AG04449 (cell line): ENCODE measurements at regions of chr2 and their contacts with region 1.

Region 1: DNA sequence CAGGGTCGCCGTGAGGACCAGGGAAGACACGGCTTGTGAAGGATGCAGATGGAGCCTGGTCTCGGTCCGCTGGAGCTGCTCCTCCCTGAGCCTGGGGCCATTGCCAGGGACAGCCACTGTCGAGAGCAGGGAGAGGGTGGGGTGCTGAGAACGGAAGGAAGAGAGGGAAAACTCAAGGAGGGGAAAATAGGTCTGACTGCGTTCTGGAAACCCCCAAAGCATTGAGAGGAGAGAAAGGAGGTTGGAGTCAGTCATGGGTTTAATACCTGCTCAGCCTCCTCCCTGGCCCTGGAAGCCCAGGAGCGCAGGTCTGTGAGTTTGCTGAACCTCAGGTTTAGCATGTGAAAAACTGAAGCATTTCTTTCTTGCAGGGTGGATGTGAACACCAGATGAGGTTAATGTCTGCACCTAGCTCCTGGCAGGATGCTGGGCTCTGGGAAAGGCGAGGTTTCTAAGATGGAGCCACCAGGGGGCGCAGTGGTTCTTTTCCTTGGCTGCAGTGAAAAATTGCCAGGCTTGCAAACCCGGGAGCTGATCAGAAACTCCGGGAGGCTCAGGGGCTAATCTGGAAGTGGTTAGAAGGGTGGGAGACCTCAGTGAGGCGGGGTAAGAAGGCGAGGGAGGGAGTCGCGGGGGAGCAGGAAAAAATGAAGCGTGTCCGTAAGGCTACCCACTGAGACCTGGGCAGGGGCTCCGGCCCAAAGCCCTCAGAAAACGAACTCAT is 33.6 kb upstream of the RNF149 start:
- DNase-seq: no peak
- H3K4me3 ChIP-seq: peak overlapping the region; percentile 39
- CTCF ChIP-seq: peak; percentile 81

Region 2: DNA sequence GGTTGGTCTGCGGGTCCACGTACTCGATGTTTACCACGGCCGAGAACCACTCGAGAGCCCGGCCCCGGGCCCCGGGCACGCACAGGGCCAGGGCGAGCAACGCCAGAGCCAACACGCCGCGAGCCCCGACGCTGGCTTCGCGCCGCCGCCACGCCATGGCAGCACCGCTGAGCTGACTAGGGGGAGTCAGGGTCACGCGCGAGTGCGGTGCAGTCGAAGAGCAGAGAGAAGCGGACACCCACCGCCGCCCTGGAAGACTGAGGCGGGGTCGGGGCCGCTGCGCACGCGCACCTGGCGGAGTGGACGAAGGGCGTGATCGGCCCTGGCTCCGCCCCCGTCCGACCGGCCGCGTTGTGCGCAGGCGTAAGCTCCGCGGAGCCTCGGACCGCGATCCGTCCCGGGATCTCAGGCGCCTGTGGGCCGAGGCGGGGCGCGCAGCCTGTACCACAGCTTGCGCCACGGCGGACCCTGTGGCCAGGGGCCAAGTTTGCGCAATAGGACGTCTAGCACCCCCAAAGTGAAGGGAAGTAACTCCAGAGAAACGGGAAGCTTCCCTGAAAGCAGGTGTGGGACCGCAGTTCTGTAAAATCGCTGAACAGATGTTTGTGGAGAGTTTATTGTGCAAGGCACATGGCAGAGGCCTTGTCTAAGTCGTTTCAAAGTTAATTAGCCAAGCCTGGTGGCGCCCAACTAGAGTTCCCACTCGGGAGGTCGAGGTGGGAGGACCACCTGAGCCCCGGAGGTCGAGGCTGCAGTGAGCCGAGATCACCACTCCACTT is 33.4 kb before region 1 on chr2 and contains the start of gene RNF149:
- CTCF ChIA-PET with region 1: interaction called, 12 read pairs
- POLR2A ChIA-PET with region 1: interaction called, 3 read pairs
- DNase-seq: no peak
- H3K4me3 ChIP-seq: peak within 1 kb of the TSS; percentile 84
- CTCF ChIP-seq: no peak

Region 3: DNA sequence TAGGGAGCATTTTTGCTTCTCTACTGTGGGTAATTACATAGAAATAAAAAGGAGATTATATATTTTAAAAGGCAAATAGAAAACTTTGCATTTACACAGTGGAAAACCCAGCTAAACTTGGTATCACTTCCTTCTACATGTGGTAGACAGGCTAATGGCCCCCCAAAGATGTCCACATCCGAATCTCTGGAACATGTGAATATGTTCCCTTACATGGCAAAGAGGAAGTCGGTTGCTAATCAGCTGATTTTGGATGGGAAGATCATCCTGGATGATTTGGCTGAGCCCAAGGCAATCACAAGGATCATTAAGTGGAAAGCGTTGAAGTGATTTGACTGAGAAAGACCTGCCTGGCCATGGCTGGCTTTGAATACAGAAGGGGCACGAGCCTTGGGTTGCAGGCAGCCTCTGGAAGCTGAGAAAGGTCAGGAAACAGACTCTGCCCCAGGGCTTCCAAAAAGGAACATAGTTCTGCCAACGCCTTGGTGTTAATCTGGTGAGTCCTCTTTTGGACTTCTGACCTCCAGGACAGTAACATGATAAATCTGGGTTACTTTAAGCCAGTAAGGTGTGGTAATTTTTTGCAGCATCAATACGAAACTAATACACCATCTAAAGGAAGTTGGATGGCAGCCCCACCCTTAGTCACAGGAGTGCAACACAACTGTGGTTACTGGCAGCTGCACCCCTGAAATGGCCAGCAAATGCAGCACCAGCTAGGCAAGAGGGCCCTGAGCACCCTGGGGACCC is 19.2 kb after region 1 on chr2:
- CTCF ChIA-PET with region 1: interaction called, 102 read pairs
- POLR2A ChIA-PET with region 1: no interaction called
- DNase-seq: no peak
- H3K4me3 ChIP-seq: no peak overlapping the region
- CTCF ChIP-seq: no peak

Region 4: GRCh38 chr2:101387151-101387807 is 45.2 kb after region 1 on chr2 and contains the start of gene CREG2:
- CTCF ChIA-PET with region 1: interaction called, 36 read pairs
- POLR2A ChIA-PET with region 1: no interaction called
- DNase-seq: no peak
- H3K4me3 ChIP-seq: peak within 1 kb of the TSS; percentile 59
- CTCF ChIP-seq: peak; percentile 55

Region 5: GRCh38 chr2:101410716-101411211 is 68.7 kb after region 1 on chr2:
- CTCF ChIA-PET with region 1: interaction called, 53 read pairs
- POLR2A ChIA-PET with region 1: no interaction called
- DNase-seq: no peak
- H3K4me3 ChIP-seq: no peak overlapping the region
- CTCF ChIP-seq: no peak

Region 6: DNA sequence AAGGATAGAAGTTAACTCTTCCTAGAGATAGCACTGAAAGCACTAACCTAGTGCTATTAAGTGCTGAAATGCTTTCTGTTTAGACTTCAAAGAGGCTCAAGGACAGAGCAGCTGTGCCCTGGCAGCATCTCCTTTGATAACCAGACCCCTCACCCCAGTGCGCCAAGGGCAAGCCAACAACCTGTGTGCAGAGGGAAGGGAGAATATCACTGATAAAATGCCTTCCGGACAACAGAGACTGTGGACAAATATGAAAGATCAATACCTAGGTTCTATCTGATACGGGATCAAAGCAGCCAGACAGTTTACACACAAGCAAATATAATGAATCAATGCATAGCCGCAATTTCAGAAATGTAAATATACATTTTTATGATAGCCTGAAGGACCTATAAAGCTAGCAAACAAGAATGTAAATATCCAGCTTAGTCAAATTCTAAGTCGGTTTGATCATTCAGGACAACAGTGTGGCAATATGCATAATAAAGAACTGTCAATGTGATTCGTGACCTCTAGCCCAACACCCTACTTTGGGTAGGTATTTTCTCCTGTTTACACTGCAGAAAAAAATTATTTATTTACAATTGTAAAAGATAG is 224.7 kb after region 1 on chr2:
- CTCF ChIA-PET with region 1: no interaction called
- POLR2A ChIA-PET with region 1: no interaction called
- DNase-seq: no peak
- H3K4me3 ChIP-seq: no peak overlapping the region
- CTCF ChIP-seq: no peak

Region 7: DNA sequence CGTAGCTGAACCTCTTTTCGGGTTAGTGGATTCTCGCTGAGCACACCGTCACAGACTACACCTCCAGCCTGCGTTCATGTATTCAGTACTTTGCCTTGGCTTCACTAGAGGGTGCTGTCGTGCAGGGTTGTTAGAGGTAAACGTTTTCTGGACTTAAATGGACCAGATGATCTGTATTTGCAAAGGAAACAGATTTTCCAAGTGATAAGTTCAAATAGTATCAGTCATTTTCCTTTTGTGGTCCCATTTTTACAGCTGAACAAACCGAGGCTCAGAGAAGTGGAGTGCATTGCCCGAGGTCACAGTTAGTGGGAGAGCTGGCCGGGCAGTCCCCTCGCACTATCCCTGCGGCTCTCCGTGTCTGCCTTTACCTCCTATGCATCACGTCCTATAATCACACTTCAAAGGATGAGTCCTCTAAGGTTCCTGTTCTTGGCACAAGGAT is 481.3 kb after region 1 on chr2:
- CTCF ChIA-PET with region 1: interaction called, 10 read pairs
- POLR2A ChIA-PET with region 1: no interaction called
- DNase-seq: no peak
- H3K4me3 ChIP-seq: no peak overlapping the region
- CTCF ChIP-seq: peak; percentile 65